ENCODE measurements at regions of chr6 and their contacts with region 1.

Region 1: DNA sequence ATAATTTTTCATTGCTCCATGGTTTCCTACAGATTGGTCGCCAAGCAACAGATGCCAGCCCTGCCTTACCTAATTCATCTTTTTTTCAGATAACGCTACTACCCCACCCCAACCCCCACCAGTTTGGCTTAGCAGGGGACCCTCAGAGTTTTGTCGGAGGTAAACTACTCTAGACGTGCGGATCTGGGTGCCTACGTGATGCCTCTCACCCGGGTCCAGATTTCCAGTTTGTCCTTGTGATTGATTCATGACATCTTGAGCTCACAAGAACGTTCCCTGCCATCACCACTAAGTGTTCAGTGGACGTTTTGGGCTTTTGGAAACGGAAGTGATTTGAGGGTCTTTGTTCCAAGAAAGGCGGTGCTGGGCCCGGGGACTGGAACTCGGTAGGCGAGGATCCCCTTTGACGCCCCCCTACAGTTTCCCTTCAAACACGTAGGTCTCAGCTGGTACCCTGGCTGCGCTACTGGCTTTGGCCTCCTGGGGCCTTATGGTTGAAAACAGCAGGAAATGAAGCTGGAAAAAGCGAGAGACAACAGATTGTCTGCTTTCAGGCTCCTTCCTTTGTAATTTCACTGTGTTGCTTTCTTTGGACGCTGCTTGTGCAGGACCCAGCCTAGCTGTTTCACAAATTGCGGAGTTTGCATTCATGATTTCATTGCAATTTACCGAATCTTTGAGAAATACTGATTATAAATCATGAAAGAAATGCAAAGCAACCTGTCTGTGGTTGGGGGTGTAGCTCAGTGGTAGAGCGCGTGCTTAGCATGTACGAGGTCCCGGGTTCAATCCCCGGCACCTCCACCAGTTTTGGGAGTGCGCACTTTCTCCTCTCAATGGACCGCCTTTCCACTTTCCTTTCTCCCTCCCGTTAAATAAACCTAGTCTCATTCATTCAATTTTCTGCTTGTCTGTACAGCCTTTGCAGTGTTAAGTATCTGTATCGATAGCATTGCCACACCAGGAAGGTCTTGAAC is 81.0 kb downstream of the GPX5 start:
- DNase-seq: peak; percentile 78
- H3K4me3 Mint-ChIP-seq: peak overlapping the region; percentile 70
- H3K27ac Mint-ChIP-seq: peak overlapping the region; percentile 32
- H3K4me1 Mint-ChIP-seq: peaks cover 6% of the 10 kb centered on the region
- H3K27me3 Mint-ChIP-seq: no peaks in the 10 kb centered on the region
- CTCF ChIP-seq: peak; percentile 54

Region 2: DNA sequence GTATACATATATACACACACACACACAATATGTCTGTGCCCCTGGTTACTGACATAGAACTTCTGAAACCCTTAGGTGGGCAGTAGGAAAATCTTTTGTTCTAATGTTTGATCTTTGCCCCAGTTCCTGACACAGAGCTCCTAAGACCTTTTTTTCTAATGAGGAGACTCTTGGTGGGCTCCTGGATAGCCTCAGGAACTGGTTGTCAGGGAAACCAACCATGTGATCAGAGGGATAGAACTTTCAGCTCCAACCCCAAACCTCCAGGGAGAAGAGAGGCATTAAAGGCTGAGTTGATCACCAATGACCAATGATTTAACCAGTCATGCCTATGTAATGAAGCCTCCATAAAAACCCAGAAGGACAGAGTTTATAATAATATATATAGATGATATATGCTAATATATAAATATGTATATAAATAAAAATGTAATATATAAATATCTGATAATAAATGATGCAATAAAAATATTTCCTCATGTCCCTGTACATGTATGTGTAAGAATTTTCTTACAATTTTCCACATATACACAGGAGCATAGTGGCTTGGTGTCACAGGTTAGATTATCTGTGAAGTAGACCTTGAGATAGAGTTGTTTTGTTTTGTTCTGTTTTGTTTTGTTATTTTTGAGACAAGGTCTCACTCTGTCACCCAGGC is 12.3 kb after region 1 on chr6:
- CTCF ChIA-PET with region 1: no interaction called
- POLR2A ChIA-PET with region 1: no interaction called
- intact Hi-C with region 1: no loop called
- DNase-seq: no peak
- H3K4me3 Mint-ChIP-seq: no peak overlapping the region
- H3K27ac Mint-ChIP-seq: no peak overlapping the region
- H3K4me1 Mint-ChIP-seq: no peaks in the 10 kb centered on the region
- H3K27me3 Mint-ChIP-seq: no peaks in the 10 kb centered on the region
- CTCF ChIP-seq: no peak

Region 3: DNA sequence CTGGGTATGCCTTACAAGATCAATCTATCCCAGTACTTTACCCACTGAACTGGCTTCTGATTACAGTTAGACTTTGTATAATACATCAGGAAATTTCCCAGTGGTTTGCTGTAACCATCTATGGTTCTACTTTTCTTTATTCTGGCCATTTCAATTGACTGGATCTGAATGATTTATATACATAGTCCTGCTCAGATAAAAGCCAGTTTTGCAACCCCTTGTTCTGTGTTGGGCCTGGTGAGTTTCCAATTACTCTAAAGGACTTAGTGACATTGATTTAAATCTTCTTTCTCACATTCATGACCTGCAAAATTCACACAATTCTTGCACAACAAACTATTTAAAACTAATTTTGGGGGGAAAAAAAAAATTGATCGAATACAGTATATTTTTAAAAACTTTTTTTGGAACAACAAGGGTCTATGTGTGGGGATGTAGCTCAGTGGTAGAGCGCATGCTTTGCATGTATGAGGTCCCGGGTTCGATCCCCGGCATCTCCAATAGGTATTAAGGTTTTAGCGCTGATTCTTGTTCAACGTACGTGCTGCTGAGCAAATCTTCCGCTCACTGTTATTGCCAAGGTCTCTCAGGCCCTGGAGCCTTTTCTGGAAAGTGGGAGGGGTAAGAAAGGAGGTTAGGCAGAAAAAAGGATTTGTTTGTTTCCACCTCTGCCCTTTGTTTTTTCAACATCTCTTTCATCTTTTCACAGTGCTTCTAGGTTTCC is 36.5 kb after region 1 on chr6:
- CTCF ChIA-PET with region 1: no interaction called
- POLR2A ChIA-PET with region 1: interaction called, 5 read pairs
- intact Hi-C with region 1: loop called (anchors 2 kb)
- DNase-seq: peak; percentile 76
- H3K4me3 Mint-ChIP-seq: peak overlapping the region; percentile 71
- H3K27ac Mint-ChIP-seq: peak overlapping the region; percentile 76
- H3K4me1 Mint-ChIP-seq: peaks cover 6% of the 10 kb centered on the region
- H3K27me3 Mint-ChIP-seq: no peaks in the 10 kb centered on the region
- CTCF ChIP-seq: no peak

Region 4: GRCh38 chr6:28664870-28665396 is 58.2 kb after region 1 on chr6:
- CTCF ChIA-PET with region 1: no interaction called
- POLR2A ChIA-PET with region 1: no interaction called
- intact Hi-C with region 1: no loop called
- DNase-seq: no peak
- H3K4me3 Mint-ChIP-seq: no peak overlapping the region
- H3K27ac Mint-ChIP-seq: no peak overlapping the region
- H3K4me1 Mint-ChIP-seq: no peaks in the 10 kb centered on the region
- H3K27me3 Mint-ChIP-seq: no peaks in the 10 kb centered on the region
- CTCF ChIP-seq: no peak

Region 5: DNA sequence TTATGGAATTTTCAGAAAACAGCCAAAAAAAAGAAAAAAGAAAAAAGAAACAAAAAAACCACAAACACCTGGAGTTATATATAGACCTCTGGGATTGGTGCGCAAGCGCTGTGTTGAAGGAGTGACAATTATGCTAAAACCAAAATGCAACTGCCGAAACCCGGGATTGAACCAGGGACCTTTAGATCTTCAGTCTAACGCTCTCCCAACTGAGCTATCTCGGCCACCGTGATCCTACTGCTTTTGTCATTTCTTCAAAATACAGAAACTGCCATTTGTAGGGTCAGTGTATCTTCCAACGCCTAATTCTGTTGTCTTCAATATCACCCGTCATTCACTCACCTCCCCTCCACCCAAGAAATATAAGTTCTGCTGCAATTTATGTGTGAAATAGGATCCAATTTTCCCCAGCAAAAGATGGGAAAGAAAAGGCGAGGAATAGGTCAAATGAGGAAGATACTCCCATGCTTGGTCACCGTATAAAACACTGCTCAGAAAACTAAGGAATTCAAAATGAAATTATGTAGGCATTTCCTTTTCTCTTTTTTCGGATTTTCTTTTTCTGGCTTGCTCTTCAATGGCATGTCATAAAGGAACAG is 201.1 kb after region 1 on chr6:
- CTCF ChIA-PET with region 1: no interaction called
- POLR2A ChIA-PET with region 1: no interaction called
- intact Hi-C with region 1: loop called (anchors 10 kb)
- DNase-seq: peak; percentile 76
- H3K4me3 Mint-ChIP-seq: peak overlapping the region; percentile 41
- H3K27ac Mint-ChIP-seq: no peak overlapping the region
- H3K4me1 Mint-ChIP-seq: peaks cover 23% of the 10 kb centered on the region
- H3K27me3 Mint-ChIP-seq: no peaks in the 10 kb centered on the region
- CTCF ChIP-seq: no peak

Region 6: GRCh38 chr6:29399525-29399924 is 792.8 kb after region 1 on chr6:
- CTCF ChIA-PET with region 1: no interaction called
- POLR2A ChIA-PET with region 1: no interaction called
- intact Hi-C with region 1: no loop called
- DNase-seq: no peak
- H3K4me3 Mint-ChIP-seq: no peak overlapping the region
- H3K27ac Mint-ChIP-seq: no peak overlapping the region
- H3K4me1 Mint-ChIP-seq: no peaks in the 10 kb centered on the region
- H3K27me3 Mint-ChIP-seq: peaks cover 96% of the 10 kb centered on the region
- CTCF ChIP-seq: no peak

Measured in MCF 10A (cell line).